A673 (cell line): ENCODE measurements at regions of chr5 and their contacts with region 1.

Region 1: GRCh38 chr5:134145779-134146581 is 30.8 kb downstream of the SKP1 start:
- DNase-seq: peak; percentile 79
- H3K4me3 ChIP-seq: no peak overlapping the region
- H3K27ac ChIP-seq: no peak overlapping the region
- H3K4me1 ChIP-seq: no peaks in the 10 kb centered on the region
- H3K27me3 ChIP-seq: no peaks in the 10 kb centered on the region
- CTCF ChIP-seq: peak; percentile 91

Region 2: GRCh38 chr5:132386644-132387286 is 1759.2 kb before region 1 on chr5:
- CTCF ChIA-PET with region 1: no interaction called
- POLR2A ChIA-PET with region 1: no interaction called
- intact Hi-C with region 1: no loop called
- DNase-seq: peak; percentile 72
- H3K4me3 ChIP-seq: no peak overlapping the region
- H3K27ac ChIP-seq: no peak overlapping the region
- H3K4me1 ChIP-seq: no peaks in the 10 kb centered on the region
- H3K27me3 ChIP-seq: no peaks in the 10 kb centered on the region
- CTCF ChIP-seq: peak; percentile 83

Region 3: DNA sequence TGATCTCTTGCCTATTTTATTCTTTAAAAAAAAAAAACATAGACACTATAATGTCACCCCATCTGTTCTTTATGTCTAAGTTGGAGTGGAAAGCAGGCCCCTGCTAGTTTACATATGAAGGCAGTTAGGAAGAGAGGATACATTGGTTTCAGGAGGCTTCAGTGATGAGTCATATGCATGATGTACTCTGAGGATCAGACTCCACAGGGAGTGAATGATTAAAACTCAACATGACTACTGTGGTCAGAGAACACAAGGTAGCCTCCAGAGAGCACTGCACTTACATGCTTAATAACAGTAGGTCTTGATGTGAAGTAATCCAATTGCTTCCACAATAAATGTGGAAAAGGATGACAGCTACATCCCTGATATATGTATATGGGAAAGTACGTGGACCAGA is 510.9 kb before region 1 on chr5:
- CTCF ChIA-PET with region 1: no interaction called
- POLR2A ChIA-PET with region 1: no interaction called
- intact Hi-C with region 1: no loop called
- DNase-seq: peak; percentile 72
- H3K4me3 ChIP-seq: no peak overlapping the region
- H3K27ac ChIP-seq: no peak overlapping the region
- H3K4me1 ChIP-seq: no peaks in the 10 kb centered on the region
- H3K27me3 ChIP-seq: no peaks in the 10 kb centered on the region
- CTCF ChIP-seq: no peak

Region 4: GRCh38 chr5:134125039-134126015 is 20.7 kb before region 1 on chr5:
- CTCF ChIA-PET with region 1: no interaction called
- POLR2A ChIA-PET with region 1: no interaction called
- intact Hi-C with region 1: no loop called
- DNase-seq: no peak
- H3K4me3 ChIP-seq: no peak overlapping the region
- H3K27ac ChIP-seq: no peak overlapping the region
- H3K4me1 ChIP-seq: no peaks in the 10 kb centered on the region
- H3K27me3 ChIP-seq: no peaks in the 10 kb centered on the region
- CTCF ChIP-seq: no peak

Region 5: DNA sequence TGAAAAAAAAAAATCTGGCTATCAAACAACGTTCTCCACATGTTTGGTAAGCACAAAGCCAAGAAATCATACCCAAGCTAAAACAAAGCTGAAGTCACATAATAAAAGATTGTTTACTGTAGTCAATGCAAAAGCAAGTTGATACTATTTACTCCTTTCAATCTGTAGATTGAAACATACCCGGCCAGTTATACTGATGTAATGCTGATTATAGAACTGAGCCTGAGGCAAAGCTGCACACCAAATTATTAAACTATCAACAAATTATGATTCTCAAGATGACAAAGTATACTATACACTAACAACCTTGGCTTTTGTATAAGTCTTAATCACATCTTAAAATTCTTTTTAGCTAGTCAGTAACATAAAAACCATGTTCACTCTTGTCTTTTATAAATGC is 76.6 kb after region 1 on chr5:
- CTCF ChIA-PET with region 1: interaction called, 10 read pairs
- POLR2A ChIA-PET with region 1: no interaction called
- intact Hi-C with region 1: no loop called
- DNase-seq: no peak
- H3K4me3 ChIP-seq: peak overlapping the region; percentile 96
- H3K27ac ChIP-seq: no peak overlapping the region
- H3K4me1 ChIP-seq: peaks cover 8% of the 10 kb centered on the region
- H3K27me3 ChIP-seq: no peaks in the 10 kb centered on the region
- CTCF ChIP-seq: no peak